ENCODE measurements at regions of chr5 and their contacts with region 1.

Region 1: DNA sequence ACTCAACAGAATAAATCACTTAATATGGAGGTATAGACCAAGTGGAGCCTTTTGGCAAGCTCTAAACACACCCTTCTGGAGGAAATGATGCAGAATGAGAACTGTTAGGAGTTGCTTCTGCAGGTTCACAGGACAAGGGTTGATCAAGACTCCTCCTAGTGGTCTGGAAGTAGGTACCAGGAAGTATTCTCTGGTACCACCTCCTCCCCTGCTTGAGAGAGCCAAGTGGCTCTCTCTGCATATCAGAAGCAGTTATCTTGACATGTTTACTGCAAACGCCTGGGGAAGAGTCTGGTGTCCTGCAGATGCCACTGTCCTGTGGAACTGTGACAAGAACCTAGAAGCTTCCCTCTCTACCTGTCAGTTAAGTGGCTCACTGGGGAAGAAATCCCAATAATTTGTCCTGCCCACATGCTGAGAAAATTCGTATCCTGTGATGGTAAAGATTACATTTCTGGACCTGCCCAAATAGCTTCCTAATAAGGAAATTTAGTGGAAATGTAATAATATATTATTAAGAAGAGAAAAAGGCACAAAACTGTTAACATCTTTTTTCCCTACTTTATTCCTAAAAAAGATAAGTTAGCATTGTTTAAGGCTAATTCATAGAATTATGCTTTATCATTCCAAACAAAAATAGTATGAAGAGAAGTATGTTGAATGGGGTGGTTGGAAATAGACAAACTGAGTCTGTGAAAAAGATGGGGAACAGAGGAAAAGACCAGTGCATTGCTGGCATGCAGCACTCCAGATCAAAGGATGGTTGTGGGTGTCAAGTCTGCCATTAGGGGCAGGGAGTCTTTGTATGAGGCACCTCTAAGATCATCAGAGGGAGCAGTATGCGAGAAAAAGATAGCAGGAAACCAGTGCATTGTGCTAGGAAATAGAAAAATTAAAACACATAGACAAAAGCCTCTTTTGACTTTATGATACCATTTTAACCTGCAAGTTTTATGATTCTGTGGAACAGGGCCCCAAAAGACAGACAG is 118.8 kb downstream of the CDC42SE2 start:
- DNase-seq: peak; percentile 74
- H3K4me3 Mint-ChIP-seq: peak overlapping the region; percentile 30
- H3K27ac Mint-ChIP-seq: peak overlapping the region; percentile 90
- H3K4me1 Mint-ChIP-seq: peaks cover 85% of the 10 kb centered on the region
- H3K27me3 Mint-ChIP-seq: no peaks in the 10 kb centered on the region

Region 2: GRCh38 chr5:131263648-131264450 is 118.9 kb before region 1 on chr5 and contains the start of gene CDC42SE2:
- CTCF ChIA-PET with region 1: interaction called, 28 read pairs
- POLR2A ChIA-PET with region 1: interaction called, 9 read pairs
- DNase-seq: peak; percentile 83
- H3K4me3 Mint-ChIP-seq: peak within 1 kb of the TSS; percentile 84
- H3K27ac Mint-ChIP-seq: peak within 1 kb of the TSS; percentile 97
- H3K4me1 Mint-ChIP-seq: peaks cover 43% of the 10 kb centered on the region
- H3K27me3 Mint-ChIP-seq: no peaks in the 10 kb centered on the region
- total RNA-seq, gene CDC42SE2: 145 TPM

Region 3: DNA sequence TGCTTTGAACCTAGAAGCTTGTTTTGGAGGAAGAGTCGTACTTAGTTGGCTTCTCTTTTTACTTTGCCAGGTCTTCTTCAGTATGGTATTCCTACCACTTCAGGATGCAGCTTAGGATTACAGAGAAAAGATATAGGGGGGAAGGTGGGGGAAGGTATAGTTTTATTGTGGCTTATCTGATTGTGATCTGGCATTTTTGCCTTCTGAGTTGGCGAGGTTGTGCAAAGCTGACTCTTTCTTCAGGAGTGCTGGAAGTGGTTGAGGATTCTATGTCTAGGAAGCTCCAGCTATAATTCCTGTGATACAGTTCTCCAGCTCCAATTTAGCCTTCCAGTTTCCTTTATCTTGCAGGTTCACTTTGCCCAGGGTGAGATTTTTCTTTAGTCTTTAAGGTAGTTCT is 111.9 kb before region 1 on chr5:
- CTCF ChIA-PET with region 1: interaction called, 28 read pairs
- POLR2A ChIA-PET with region 1: interaction called, 4 read pairs
- DNase-seq: no peak
- H3K4me3 Mint-ChIP-seq: peak overlapping the region; percentile 70
- H3K27ac Mint-ChIP-seq: peak overlapping the region; percentile 87
- H3K4me1 Mint-ChIP-seq: peaks cover 71% of the 10 kb centered on the region
- H3K27me3 Mint-ChIP-seq: no peaks in the 10 kb centered on the region

Region 4: GRCh38 chr5:131281133-131281867 is 101.4 kb before region 1 on chr5:
- CTCF ChIA-PET with region 1: interaction called, 12 read pairs
- POLR2A ChIA-PET with region 1: interaction called, 5 read pairs
- DNase-seq: peak; percentile 49
- H3K4me3 Mint-ChIP-seq: peak overlapping the region; percentile 77
- H3K27ac Mint-ChIP-seq: peak overlapping the region; percentile 96
- H3K4me1 Mint-ChIP-seq: peaks cover 88% of the 10 kb centered on the region
- H3K27me3 Mint-ChIP-seq: no peaks in the 10 kb centered on the region

Region 5: DNA sequence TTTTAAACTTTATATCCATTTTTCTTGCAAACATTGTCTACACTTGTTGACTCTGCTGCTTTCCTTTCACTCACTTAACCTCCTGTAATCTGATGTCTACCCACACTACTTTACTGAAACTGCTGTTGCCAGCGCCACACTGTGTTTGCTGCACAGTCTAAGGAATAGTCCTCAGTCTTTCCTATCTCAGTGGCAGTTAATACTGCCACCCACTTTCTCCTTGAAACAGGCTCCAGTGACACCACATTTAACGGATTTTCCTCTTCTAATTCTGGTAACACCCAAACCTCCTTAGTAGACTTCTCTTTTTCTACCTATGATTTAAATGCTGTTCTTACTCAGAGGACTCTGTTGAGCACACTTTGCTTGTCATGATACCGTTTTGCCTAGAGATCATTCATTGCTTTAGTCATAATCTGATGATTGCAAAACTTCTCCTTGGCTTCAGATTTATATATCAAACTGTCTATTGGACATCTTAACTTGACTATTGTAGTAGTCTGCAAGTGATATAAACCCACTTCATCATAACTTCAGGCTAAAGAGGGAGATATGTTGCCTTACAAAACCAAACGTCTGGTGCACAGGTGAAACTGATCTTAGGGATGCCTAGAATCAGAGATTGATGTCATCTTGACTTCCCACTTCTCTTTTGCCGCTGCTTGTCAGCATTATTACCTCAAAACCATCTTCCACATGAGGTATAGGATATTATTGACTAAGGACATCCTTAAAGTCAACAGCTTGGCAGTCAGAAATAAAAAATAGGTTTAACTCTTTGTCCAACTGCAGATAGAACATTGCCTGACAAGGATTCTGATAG is 24.8 kb before region 1 on chr5:
- CTCF ChIA-PET with region 1: interaction called, 15 read pairs
- POLR2A ChIA-PET with region 1: interaction called, 18 read pairs
- DNase-seq: peak; percentile 39
- H3K4me3 Mint-ChIP-seq: peak overlapping the region; percentile 1
- H3K27ac Mint-ChIP-seq: peak overlapping the region; percentile 66
- H3K4me1 Mint-ChIP-seq: peaks cover 66% of the 10 kb centered on the region
- H3K27me3 Mint-ChIP-seq: no peaks in the 10 kb centered on the region

Region 6: GRCh38 chr5:131364507-131365050 is 18.1 kb before region 1 on chr5:
- CTCF ChIA-PET with region 1: interaction called, 15 read pairs
- POLR2A ChIA-PET with region 1: no interaction called
- DNase-seq: peak; percentile 51
- H3K4me3 Mint-ChIP-seq: no peak overlapping the region
- H3K27ac Mint-ChIP-seq: peak overlapping the region; percentile 80
- H3K4me1 Mint-ChIP-seq: peaks cover 73% of the 10 kb centered on the region
- H3K27me3 Mint-ChIP-seq: no peaks in the 10 kb centered on the region

Region 7: GRCh38 chr5:131481569-131481968 is 98.9 kb after region 1 on chr5:
- CTCF ChIA-PET with region 1: no interaction called
- POLR2A ChIA-PET with region 1: no interaction called
- DNase-seq: no peak
- H3K4me3 Mint-ChIP-seq: no peak overlapping the region
- H3K27ac Mint-ChIP-seq: no peak overlapping the region
- H3K4me1 Mint-ChIP-seq: peaks cover 34% of the 10 kb centered on the region
- H3K27me3 Mint-ChIP-seq: no peaks in the 10 kb centered on the region